ENCODE measurements at regions of chr11 and their contacts with region 1.

Region 1: DNA sequence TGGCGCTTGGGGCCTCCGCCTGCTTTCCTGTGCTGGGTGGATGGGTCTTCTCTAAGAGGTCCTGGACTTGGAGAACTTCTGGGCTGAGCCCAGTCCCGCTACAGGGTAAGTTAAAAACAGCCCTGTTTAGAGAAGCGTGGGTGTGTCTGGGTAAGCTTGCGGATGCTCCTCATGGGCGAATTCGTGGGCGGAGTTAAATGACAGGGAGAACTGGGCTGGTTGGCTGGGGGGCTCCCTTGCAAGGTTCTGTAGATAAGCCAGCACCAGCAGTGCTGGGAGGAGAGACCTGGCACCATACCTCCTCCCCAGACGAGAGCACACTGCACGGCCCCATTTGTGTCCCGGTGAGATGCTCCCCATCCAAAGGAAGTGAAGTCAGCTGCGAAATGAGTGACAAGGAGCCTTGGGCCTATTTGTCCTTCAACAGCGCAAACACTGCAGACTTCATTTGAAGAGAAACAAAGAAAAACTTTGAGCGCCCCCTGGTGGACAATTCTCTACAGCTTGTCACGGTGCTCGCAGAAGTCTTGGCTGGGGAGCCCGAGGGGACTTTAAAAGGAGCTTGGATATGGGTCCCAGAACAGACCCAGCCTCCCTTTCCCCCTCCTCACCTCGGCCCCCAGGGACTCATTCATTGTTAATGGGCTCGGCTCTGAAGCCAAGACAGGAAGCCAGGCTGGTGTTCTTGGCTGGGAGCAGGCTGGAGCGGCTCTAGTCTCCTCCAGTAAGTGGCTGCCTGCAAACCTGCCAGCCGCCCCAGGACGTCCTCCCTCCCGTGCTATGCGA is 39.5 kb downstream of the TP53I11 start:
- DNase-seq: peak; percentile 95
- H3K4me3 Mint-ChIP-seq: no peak overlapping the region
- H3K27ac Mint-ChIP-seq: no peak overlapping the region
- H3K4me1 Mint-ChIP-seq: peaks cover 4% of the 10 kb centered on the region
- H3K27me3 Mint-ChIP-seq: no peaks in the 10 kb centered on the region

Region 2: GRCh38 chr11:44556735-44557409 is 354.4 kb before region 1 on chr11:
- intact Hi-C with region 1: loop called (anchors 2 kb)
- DNase-seq: peak; percentile 90
- H3K4me3 Mint-ChIP-seq: no peak overlapping the region
- H3K27ac Mint-ChIP-seq: peak overlapping the region; percentile 68
- H3K4me1 Mint-ChIP-seq: peaks cover 25% of the 10 kb centered on the region
- H3K27me3 Mint-ChIP-seq: peaks cover 4% of the 10 kb centered on the region

Region 3: DNA sequence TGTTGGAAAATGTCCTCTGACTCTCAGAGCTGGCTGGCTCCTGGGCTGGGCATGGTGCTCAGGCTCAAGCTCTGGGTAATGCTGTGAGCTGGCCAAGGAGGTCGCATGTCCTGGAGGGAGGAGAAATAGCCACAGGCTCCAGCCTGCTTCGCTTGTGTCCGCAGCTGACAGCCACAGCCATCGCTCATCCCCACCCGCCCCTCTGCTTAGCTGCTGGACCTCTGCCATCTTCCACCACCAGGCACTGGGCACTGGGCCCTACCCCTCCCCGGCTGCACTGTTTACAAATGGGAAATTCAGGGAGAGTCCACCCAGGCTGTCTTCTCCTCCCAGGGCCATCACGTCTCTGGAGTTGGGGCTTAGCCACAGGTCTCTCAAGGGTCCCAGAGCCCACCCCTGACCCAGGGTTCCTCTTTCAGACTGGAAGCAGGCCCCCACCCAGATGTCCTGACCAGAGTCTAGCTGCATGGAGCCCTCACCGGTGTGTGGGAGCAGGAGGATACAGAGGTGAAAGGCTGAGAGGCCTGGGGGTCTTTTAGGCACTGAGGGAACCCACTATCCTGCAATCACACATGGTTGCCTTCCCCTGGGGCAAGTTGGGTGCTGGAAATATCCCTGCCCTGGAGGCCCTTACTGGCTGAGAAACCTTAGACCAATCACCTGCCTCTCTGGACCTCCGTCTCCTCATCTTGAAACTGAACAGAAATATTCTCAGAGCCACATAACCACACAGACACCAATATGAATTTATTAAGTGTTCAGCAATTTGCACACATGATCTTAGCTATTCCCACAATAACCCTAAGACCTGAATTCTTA is 283.1 kb before region 1 on chr11:
- intact Hi-C with region 1: loop called (anchors 2 kb)
- DNase-seq: peak; percentile 54
- H3K4me3 Mint-ChIP-seq: no peak overlapping the region
- H3K27ac Mint-ChIP-seq: no peak overlapping the region
- H3K4me1 Mint-ChIP-seq: peaks cover 11% of the 10 kb centered on the region
- H3K27me3 Mint-ChIP-seq: no peaks in the 10 kb centered on the region

Region 4: GRCh38 chr11:44658506-44658850 is 252.7 kb before region 1 on chr11:
- intact Hi-C with region 1: loop called (anchors 2 kb)
- DNase-seq: peak; percentile 79
- H3K4me3 Mint-ChIP-seq: no peak overlapping the region
- H3K27ac Mint-ChIP-seq: no peak overlapping the region
- H3K4me1 Mint-ChIP-seq: peaks cover 20% of the 10 kb centered on the region
- H3K27me3 Mint-ChIP-seq: peaks cover 14% of the 10 kb centered on the region

Region 5: GRCh38 chr11:44727373-44728287 is 183.6 kb before region 1 on chr11:
- intact Hi-C with region 1: loop called (anchors 1 kb)
- DNase-seq: peak; percentile 93
- H3K4me3 Mint-ChIP-seq: peak overlapping the region; percentile 87
- H3K27ac Mint-ChIP-seq: peak overlapping the region; percentile 10
- H3K4me1 Mint-ChIP-seq: peaks cover 38% of the 10 kb centered on the region
- H3K27me3 Mint-ChIP-seq: peaks cover 41% of the 10 kb centered on the region

Region 6: GRCh38 chr11:45041596-45041995 is 130.4 kb after region 1 on chr11:
- intact Hi-C with region 1: no loop called
- DNase-seq: no peak
- H3K4me3 Mint-ChIP-seq: no peak overlapping the region
- H3K27ac Mint-ChIP-seq: no peak overlapping the region
- H3K4me1 Mint-ChIP-seq: peaks cover 6% of the 10 kb centered on the region
- H3K27me3 Mint-ChIP-seq: peaks cover 4% of the 10 kb centered on the region

Region 7: GRCh38 chr11:45371251-45372115 is 460.3 kb after region 1 on chr11:
- intact Hi-C with region 1: no loop called
- DNase-seq: peak; percentile 87
- H3K4me3 Mint-ChIP-seq: no peak overlapping the region
- H3K27ac Mint-ChIP-seq: no peak overlapping the region
- H3K4me1 Mint-ChIP-seq: peaks cover 9% of the 10 kb centered on the region
- H3K27me3 Mint-ChIP-seq: peaks cover 25% of the 10 kb centered on the region